Mammary epithelial cell (primary cell): ENCODE measurements at regions of chr12 and their contacts with region 1.

Region 1: DNA sequence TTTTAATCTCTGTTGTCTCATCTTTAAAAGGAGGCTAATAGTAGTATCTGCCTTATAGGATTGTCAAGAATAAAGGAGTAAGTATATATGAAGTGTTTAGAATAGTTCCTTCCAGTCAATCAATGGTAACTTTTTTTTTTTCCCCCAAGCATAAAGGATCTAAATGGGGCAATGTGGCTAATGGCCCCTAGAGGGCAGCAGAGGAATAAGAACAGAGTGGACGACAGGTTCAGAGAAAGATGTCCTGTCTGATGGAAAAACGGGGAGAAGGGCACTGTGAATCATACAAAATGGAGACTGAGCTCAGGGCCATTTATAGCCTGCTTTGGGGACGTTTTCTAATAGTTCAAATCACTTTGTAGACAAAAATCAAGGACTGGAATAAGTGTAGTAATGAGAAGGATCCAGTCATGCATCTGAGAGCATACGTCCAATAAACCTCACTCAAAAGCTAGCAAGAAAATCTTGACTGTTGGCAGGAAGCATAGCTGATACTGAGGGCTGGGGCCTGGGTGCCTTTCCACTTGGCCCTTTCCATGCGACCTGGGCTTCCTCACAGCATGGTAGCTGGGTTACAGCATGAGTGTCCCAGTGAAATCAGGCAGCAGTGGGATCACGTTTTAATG is 51.3 kb downstream of the IFNG-AS1 start:
- DNase-seq: peak; percentile 70
- H3K4me3 ChIP-seq: no peak overlapping the region
- H3K27ac ChIP-seq: peak overlapping the region; percentile 86
- H3K4me1 ChIP-seq: peaks cover 28% of the 10 kb centered on the region
- H3K27me3 ChIP-seq: no peaks in the 10 kb centered on the region
- CTCF ChIP-seq: peak; percentile 88 to 94

Region 2: DNA sequence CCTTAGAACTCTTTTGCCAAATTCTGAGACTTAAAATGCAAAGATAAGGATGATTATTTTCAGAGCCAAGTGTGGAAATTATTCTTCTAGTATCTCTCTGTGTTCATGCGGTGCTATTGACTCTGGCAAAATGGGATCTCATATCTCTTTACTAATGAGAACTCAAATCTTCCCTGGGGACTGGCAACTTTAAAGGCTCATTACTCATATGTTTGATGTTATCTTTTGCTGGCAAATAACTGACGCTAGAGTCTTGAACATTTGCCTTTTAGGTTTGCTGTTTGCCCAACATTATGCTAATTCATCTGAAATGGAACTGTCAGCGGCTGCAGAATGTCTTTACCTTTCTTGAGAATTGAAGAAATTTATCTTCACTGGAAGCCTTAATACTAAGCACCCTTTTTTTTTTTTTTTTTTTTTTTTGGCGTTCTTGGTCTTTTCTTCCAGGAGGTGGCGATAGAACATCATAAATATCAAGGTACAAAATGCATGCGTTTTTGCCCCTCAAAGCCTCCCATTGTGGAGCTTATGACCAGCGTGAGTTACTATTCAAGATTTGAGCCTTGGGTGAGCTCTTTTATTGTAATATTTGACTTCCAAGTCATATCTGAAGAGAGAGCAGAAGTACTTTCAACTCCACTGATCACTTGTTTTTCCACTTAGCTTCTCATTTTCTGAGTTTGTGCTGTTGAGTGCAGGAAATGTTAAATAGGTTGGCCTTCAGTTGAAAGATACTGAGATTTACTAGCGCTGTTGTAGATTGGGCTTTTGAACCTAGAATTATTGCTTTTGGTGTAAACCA is 684.8 kb before region 1 on chr12:
- CTCF ChIA-PET with region 1: no interaction called
- dilution Hi-C with region 1: no loop called
- in situ Hi-C with region 1: no loop called
- intact Hi-C with region 1: loop called (anchors 1 kb)
- DNase-seq: peak; percentile 39
- H3K4me3 ChIP-seq: no peak overlapping the region
- H3K27ac ChIP-seq: no peak overlapping the region
- H3K4me1 ChIP-seq: no peaks in the 10 kb centered on the region
- H3K27me3 ChIP-seq: no peaks in the 10 kb centered on the region
- CTCF ChIP-seq: peak; percentile 26 to 67

Region 3: GRCh38 chr12:67648521-67649260 is 391.9 kb before region 1 on chr12 and contains the start of gene DYRK2:
- CTCF ChIA-PET with region 1: no interaction called
- dilution Hi-C with region 1: no loop called
- in situ Hi-C with region 1: no loop called
- intact Hi-C with region 1: no loop called
- DNase-seq: peak; percentile 72
- H3K4me3 ChIP-seq: peak within 1 kb of the TSS; percentile 85 to 92 (median 88)
- H3K27ac ChIP-seq: peak within 1 kb of the TSS; percentile 86
- H3K4me1 ChIP-seq: peaks cover 25% of the 10 kb centered on the region
- H3K27me3 ChIP-seq: no peaks in the 10 kb centered on the region
- CTCF ChIP-seq: peak in 1 of 2 donors; percentile 6
- total RNA-seq, gene DYRK2: 17.8 to 25.8 TPM

Region 4: DNA sequence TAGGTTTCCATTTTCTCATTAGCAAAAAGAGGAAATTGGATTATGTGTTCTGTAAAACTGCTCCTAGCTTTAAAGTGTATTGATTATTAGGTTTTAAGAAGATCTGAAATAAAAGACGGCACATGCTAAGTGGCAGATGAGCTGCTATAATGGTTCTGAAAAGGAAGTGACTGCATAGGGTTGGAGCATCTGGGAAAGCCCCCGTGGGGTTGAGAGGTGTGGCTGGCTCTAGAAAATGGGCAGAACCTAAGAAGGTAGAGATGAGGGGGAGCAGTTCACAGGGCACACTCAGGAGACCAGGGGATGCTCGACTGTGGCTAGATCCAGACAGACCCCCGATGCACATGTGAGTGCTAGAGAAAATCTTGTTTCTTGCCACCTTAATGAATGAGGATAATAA is 49.4 kb before region 1 on chr12:
- CTCF ChIA-PET with region 1: no interaction called
- dilution Hi-C with region 1: no loop called
- in situ Hi-C with region 1: no loop called
- intact Hi-C with region 1: no loop called
- DNase-seq: no peak
- H3K4me3 ChIP-seq: no peak overlapping the region
- H3K27ac ChIP-seq: no peak overlapping the region
- H3K4me1 ChIP-seq: no peaks in the 10 kb centered on the region
- H3K27me3 ChIP-seq: peaks cover 2% of the 10 kb centered on the region
- CTCF ChIP-seq: no peak

Region 5: GRCh38 chr12:68001486-68002466 is 38.8 kb before region 1 on chr12:
- CTCF ChIA-PET with region 1: no interaction called
- dilution Hi-C with region 1: no loop called
- in situ Hi-C with region 1: no loop called
- intact Hi-C with region 1: loop called (anchors 1 kb)
- DNase-seq: no peak
- H3K4me3 ChIP-seq: no peak overlapping the region
- H3K27ac ChIP-seq: no peak overlapping the region
- H3K4me1 ChIP-seq: no peaks in the 10 kb centered on the region
- H3K27me3 ChIP-seq: no peaks in the 10 kb centered on the region
- CTCF ChIP-seq: peak; percentile 37 to 46

Region 6: DNA sequence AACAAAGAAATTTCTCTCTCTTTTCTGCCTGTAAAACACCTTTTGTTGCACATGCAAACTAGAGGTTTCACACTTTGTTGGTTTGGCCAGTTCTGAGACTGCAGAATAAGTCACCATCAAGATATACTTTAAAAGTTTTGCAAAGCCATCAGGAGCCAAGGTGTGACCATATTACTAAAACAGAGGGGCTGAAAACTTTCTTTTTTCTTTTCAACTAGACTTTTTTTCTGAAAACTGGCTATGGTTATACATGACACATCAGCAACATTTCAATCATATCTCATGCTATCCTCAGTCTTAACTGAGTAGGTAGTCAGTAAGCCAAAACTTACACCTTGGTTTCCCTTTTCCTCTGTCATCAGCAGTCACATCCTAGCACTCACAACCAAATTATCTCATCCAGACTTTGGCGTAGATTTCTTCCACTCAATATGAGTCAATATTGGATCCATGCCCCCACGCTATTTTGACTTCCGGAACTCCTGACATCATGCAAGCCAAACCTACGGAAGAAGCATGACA is 123.1 kb after region 1 on chr12:
- CTCF ChIA-PET with region 1: interaction called, 10 read pairs
- dilution Hi-C with region 1: no loop called
- in situ Hi-C with region 1: loop called (anchors 10 kb)
- intact Hi-C with region 1: loop called (anchors 1 kb)
- DNase-seq: no peak
- H3K4me3 ChIP-seq: no peak overlapping the region
- H3K27ac ChIP-seq: no peak overlapping the region
- H3K4me1 ChIP-seq: peaks cover 9% of the 10 kb centered on the region
- H3K27me3 ChIP-seq: no peaks in the 10 kb centered on the region
- CTCF ChIP-seq: no peak

Region 7: DNA sequence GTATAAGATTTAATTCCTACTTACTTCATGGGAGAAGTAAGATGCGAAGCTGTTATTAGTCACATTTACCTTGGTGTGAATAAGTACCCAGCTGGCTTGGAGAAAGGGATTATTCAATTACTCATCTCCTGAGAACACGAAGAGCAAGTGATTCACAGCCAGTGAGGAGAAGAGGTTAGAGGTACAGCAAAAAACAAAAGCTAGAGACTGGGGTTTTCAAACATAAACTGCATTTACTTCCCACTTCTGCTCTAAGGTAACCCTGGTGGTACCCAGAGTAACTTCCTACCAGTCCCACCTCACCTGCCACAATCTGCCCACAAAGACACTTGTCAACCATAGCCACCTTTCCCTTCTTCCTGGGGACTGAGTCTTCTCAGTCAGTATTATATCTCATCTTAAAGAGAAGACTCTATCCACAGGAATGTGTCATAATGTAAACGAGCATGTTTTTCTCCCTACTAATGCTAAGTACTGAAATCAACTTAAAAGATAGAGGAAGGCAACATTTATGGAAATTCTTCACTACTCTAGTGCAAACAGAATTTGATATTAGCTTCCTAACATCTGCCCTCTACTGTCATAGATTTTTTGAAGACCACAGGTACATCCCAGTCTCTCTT is 218.9 kb after region 1 on chr12:
- CTCF ChIA-PET with region 1: interaction called, 10 read pairs
- dilution Hi-C with region 1: no loop called
- in situ Hi-C with region 1: no loop called
- intact Hi-C with region 1: no loop called
- DNase-seq: peak; percentile 94
- H3K4me3 ChIP-seq: peak overlapping the region in 1 of 3 experiments; percentile 20
- H3K27ac ChIP-seq: peak overlapping the region; percentile 73
- H3K4me1 ChIP-seq: peaks cover 5% of the 10 kb centered on the region
- H3K27me3 ChIP-seq: no peaks in the 10 kb centered on the region
- CTCF ChIP-seq: no peak

Region 8: DNA sequence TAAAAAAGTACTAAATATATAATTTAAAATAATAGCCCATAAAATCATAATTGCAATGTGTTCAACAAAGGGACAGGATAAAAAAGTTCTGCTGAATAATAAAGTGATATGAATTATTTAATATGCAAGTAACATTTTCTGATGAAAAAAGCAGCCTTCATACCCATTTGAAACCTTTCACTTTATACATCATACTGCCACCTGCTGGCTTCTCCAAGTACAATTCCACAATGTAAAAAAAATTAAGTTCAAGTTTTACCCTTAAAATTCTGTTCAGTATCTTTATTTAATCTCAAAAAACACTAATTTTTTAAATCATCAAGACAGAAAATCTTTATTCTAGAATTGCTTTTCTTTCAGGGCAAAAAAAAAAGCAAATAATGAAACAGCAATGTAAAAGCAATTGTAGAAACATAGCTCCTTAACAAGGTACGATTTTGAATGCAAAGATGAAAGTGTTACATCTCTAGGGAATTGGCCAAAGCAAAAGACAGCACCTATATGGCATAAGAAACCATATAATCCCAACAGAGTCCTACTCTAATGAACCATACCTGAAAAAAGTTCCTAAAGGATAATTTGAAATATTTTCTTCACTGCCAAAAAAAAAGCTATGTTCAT is 276.6 kb after region 1 on chr12:
- CTCF ChIA-PET with region 1: interaction called, 8 read pairs
- dilution Hi-C with region 1: no loop called
- in situ Hi-C with region 1: loop called (anchors 10 to 25 kb)
- intact Hi-C with region 1: loop called (anchors 1 kb)
- DNase-seq: no peak
- H3K4me3 ChIP-seq: no peak overlapping the region
- H3K27ac ChIP-seq: no peak overlapping the region
- H3K4me1 ChIP-seq: no peaks in the 10 kb centered on the region
- H3K27me3 ChIP-seq: no peaks in the 10 kb centered on the region
- CTCF ChIP-seq: peak; percentile 55 to 57